Naive thymus-derived CD4-positive, alpha-beta T cell (primary cell): ENCODE measurements at regions of chr4 and their contacts with region 1.

Region 1: DNA sequence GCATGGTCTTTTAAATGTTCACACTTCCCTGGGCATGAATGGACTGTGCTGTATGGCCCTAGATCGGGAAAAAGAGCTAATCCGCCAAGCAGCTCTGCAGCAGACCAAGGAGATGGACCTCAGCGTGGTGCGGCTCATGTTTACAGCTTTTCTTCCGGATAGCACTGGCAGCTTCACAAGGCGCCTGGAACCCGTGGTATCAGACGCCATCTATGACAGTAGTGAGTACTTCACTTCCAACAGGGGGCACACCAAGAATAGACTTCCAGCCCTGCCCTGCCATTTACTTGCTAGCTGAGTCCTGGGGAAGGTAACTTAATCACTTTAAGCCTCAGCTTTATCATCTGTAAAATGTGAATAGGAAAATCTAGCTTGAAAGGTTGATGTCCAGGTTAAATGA is 77.7 kb downstream of the NFKB1 start:
- DNase-seq: peak in 2 of 9 donors; percentile 9 to 23
- ATAC-seq: no peak
- H3K4me3 ChIP-seq: no peak overlapping the region
- H3K4me3 Mint-ChIP-seq: peak overlapping the region in 3 of 10 donors; percentile 12 to 16 (median 14)
- H3K27ac ChIP-seq: no peak overlapping the region
- H3K27ac Mint-ChIP-seq: peak overlapping the region in 8 of 9 donors; percentile 29 to 69 (median 56)
- H3K4me1 ChIP-seq: peaks cover 7 to 41% of the 10 kb centered on the region in 2 donors
- H3K4me1 Mint-ChIP-seq: peaks cover 30 to 83% (median 75%) of the 10 kb centered on the region in 7 donors
- H3K27me3 ChIP-seq: no peaks in the 10 kb centered on the region
- H3K27me3 Mint-ChIP-seq: no peaks in the 10 kb centered on the region

Region 2: DNA sequence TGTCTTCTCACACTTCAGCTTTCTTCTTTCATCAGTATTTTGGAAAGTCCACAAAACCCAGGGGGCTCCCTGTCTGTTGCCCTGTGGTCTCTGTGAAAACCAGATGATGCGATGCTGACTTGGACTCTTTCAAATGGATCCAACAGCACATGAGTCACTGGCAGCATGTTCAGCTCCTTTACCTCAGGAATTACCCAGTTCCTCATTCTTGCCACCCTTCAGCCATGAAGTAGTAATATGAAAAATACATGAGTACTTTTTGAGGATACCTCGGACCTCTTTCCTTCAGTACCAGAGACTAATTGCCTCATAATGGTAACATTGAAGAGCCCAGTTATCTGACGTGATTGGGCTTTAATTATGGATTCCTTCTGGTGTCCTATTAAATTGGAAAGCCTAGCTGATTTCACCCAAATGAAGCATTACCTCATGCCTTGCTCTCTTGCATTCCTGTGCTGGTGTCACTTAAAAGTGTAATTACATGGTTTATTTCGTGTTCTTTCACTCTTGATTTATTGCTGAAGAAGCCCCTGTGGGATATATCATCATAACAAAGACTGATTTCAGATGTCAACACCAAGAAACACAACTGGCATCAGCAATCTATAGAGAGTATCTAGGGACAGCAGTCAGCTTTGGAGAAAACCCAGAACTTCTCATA is 14.3 kb before region 1 on chr4:
- CTCF ChIA-PET with region 1: no interaction called
- POLR2A ChIA-PET with region 1: interaction called, 4 read pairs
- intact Hi-C with region 1: loop called in 1 of 2 experiments (anchors 1 kb)
- DNase-seq: no peak
- ATAC-seq: peak; percentile 58
- H3K4me3 ChIP-seq: no peak overlapping the region
- H3K4me3 Mint-ChIP-seq: peak overlapping the region in 1 of 10 donors; percentile 6
- H3K27ac ChIP-seq: no peak overlapping the region
- H3K27ac Mint-ChIP-seq: peak overlapping the region in 6 of 9 donors; percentile 8 to 73 (median 34)
- H3K4me1 ChIP-seq: peaks cover 10 to 41% of the 10 kb centered on the region in 2 donors
- H3K4me1 Mint-ChIP-seq: peaks cover 45 to 70% (median 53%) of the 10 kb centered on the region in 7 donors
- H3K27me3 ChIP-seq: no peaks in the 10 kb centered on the region
- H3K27me3 Mint-ChIP-seq: no peaks in the 10 kb centered on the region

Region 3: DNA sequence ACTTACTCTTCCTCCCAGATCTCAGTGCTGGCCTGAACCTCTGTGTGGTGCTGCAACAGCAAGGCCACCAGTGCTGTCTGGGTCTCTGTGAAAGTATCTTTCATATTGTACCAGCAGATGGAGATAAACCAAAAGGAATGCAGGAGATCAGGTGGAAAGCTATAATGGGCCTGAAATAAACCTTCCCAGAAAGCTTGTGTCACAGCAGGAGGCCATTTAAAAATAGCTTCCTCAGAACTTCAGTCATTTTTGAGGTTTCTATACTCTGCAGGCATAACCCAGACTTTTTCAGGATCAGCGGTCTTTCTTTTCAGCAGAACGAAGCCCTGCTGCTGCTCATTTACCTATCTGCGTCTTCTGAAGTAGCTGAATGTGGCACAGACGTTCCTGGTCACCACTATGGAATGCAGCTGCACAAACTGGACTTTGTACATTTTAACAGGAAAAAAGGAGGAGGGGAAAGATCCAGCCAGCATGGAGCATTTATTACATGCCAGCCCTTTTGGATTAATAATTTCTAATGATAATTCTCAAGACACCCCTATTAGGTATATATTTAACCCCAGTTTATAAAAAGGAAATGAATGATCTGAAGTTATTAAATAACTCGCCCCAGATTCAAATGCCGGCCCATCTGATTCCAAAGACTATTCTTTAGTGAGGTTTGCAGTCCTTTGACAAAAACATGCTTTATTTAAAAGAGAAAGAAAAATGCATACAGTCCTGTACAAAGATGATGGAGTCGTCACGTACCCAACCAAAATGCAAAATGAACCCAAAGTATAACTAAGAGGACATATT is 42.1 kb after region 1 on chr4:
- CTCF ChIA-PET with region 1: interaction called, 4 read pairs
- POLR2A ChIA-PET with region 1: interaction called, 3 read pairs
- intact Hi-C with region 1: loop called (anchors 1 to 2 kb)
- DNase-seq: peak in 2 of 9 donors; percentile 34 to 45
- ATAC-seq: peak; percentile 65
- H3K4me3 ChIP-seq: no peak overlapping the region
- H3K4me3 Mint-ChIP-seq: peak overlapping the region in 3 of 10 donors; percentile 9 to 42 (median 32)
- H3K27ac ChIP-seq: no peak overlapping the region
- H3K27ac Mint-ChIP-seq: peak overlapping the region in 7 of 9 donors; percentile 20 to 85 (median 59)
- H3K4me1 ChIP-seq: peaks cover 7 to 18% of the 10 kb centered on the region in 2 donors
- H3K4me1 Mint-ChIP-seq: peaks cover 15 to 73% (median 46%) of the 10 kb centered on the region in 7 donors
- H3K27me3 ChIP-seq: no peaks in the 10 kb centered on the region
- H3K27me3 Mint-ChIP-seq: no peaks in the 10 kb centered on the region